PC-9 (cell line): ENCODE measurements at regions of chr5 and their contacts with region 1.

Region 1: DNA sequence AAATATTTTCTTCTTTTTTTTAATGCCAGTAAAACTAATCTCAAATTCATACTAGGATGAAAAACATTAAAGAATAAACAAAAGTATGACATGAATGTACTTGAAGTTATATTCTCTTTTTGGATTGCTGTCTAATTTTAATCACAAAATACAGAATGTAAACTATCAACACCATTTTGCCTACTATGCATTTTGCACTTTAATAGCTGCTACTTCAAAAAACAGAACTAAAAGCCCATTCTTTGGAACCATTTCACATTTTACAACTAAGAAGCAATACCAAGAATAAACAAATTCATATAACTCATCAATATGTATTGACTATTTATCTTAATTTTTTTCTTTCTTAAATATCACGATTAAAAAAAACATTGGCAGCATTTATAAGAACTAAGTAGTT is 58.1 kb downstream of the ADAMTS6 start:
- DNase-seq: no peak
- H3K4me3 ChIP-seq: no peak overlapping the region
- H3K27ac ChIP-seq: no peak overlapping the region
- H3K4me1 ChIP-seq: no peaks in the 10 kb centered on the region
- H3K27me3 ChIP-seq: no peaks in the 10 kb centered on the region
- CTCF ChIP-seq: no peak

Region 2: GRCh38 chr5:64869419-64869818 is 554.2 kb before region 1 on chr5:
- CTCF ChIA-PET with region 1: interaction called, 10 read pairs
- POLR2A ChIA-PET with region 1: no interaction called
- intact Hi-C with region 1: no loop called
- DNase-seq: no peak
- H3K4me3 ChIP-seq: no peak overlapping the region
- H3K27ac ChIP-seq: no peak overlapping the region
- H3K4me1 ChIP-seq: peaks cover 6% of the 10 kb centered on the region; the same call in 1 of the 2 replicates
- H3K27me3 ChIP-seq: no peaks in the 10 kb centered on the region
- CTCF ChIP-seq: no peak

Region 3: GRCh38 chr5:67283275-67283987 is 1859.8 kb after region 1 on chr5:
- CTCF ChIA-PET with region 1: no interaction called
- POLR2A ChIA-PET with region 1: no interaction called
- intact Hi-C with region 1: no loop called
- DNase-seq: no peak
- H3K4me3 ChIP-seq: no peak overlapping the region
- H3K27ac ChIP-seq: no peak overlapping the region
- H3K4me1 ChIP-seq: no peaks in the 10 kb centered on the region
- H3K27me3 ChIP-seq: no peaks in the 10 kb centered on the region; the same call in 1 of the 2 replicates
- CTCF ChIP-seq: no peak